ENCODE measurements at regions of chr6 and their contacts with region 1.

Region 1: DNA sequence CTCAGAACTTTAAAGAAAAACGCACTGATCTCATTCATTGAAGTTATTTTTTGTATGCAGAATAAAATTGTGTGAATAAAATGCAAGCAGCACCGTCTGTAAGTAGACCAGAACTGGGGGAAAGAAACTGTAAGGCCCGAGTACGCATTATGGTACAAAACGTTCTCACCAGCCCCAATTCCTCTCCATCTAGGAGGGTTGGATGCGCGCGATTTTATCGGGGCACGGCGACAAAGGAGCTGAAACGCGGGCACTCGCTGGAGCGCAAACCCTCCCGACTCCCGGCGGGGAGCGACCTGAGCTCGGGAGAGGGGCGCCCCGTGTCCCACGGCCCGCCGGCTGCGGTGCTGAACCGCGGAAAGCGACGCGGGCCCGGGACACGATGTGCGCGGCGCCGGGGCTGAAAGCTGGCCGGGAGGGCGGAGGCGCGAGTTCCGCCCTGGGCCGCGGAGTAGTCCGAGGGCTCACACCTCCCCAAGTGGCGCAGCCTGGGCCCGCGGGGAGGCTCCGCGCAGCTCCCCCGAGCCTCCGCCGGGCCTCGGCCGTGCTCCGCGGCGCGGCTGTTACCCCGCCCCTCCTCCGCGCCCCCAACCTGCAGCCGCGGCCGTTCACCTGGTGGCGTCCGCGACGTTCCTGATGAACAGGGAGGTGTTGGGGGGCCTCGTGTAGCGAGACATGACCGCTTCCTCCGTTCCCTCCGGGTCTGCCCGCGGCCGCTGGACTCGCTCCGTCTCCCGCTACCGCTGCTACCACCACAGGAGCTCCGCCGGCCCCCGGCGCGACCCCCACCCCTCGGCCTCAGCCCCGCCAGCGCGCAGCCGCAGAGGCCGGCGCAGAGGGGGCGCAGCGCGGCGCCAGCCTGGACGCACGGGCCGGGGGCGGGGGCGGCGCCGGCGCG is at the start of gene SRSF12:
- DNase-seq: peak; percentile 24
- H3K4me3 ChIP-seq: peak within 1 kb of the TSS; percentile 60
- H3K27ac ChIP-seq: no peak within 1 kb of the TSS
- H3K4me1 ChIP-seq: no peaks in the 10 kb centered on the region
- H3K27me3 ChIP-seq: no peaks in the 10 kb centered on the region
- CTCF ChIP-seq: no peak
- total RNA-seq, gene SRSF12: 0.35 TPM in 1 of 2 donors, not detected in the other

Region 2: GRCh38 chr6:89080542-89081422 is 36.7 kb before region 1 on chr6 and contains the start of gene PNRC1:
- intact Hi-C with region 1: loop called (anchors 5 kb)
- DNase-seq: peak; percentile 100
- H3K4me3 ChIP-seq: peak within 1 kb of the TSS; percentile 78
- H3K27ac ChIP-seq: peak within 1 kb of the TSS; percentile 99
- H3K4me1 ChIP-seq: no peaks in the 10 kb centered on the region
- H3K27me3 ChIP-seq: no peaks in the 10 kb centered on the region
- CTCF ChIP-seq: no peak
- total RNA-seq, gene PNRC1: 47.8 to 143 TPM

Region 3: DNA sequence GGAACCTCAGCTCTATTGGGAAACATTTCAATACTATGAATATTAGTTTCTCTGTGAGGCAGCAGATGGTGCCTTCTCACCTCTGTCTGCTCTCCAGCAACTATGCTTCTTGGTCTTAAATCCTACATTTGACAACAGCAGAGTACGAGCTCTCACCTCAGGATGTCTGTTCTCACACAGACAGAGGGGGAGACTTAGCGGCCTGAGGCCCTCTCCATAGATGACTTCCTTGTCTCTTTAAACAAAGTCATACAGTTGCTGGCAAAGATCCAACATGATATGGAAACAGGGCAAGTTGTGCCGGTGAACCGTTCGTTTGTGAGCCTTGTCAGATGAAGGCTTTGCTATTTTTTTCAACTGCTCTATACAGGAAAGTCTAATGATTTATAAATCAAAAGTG is 143.4 kb after region 1 on chr6:
- intact Hi-C with region 1: no loop called
- DNase-seq: no peak
- H3K4me3 ChIP-seq: no peak overlapping the region
- H3K27ac ChIP-seq: no peak overlapping the region
- H3K4me1 ChIP-seq: no peaks in the 10 kb centered on the region
- H3K27me3 ChIP-seq: no peaks in the 10 kb centered on the region
- CTCF ChIP-seq: no peak